ENCODE measurements at regions of chr10 and their contacts with region 1.

Region 1: GRCh38 chr10:8053446-8054290 is 820 bp upstream of the GATA3 start:
- DNase-seq: peak; percentile 93 to 95
- ATAC-seq: peak; percentile 69 to 84 (median 74)
- H3K4me3 ChIP-seq: peak overlapping the region; percentile 63
- H3K4me3 Mint-ChIP-seq: peak overlapping the region; percentile 95
- H3K27ac ChIP-seq: peak overlapping the region; percentile 73
- H3K27ac Mint-ChIP-seq: peak overlapping the region; percentile 86 to 98
- H3K4me1 ChIP-seq: peaks cover 68% of the 10 kb centered on the region
- H3K4me1 Mint-ChIP-seq: peaks cover 52 to 69% of the 10 kb centered on the region in 2 donors
- H3K27me3 ChIP-seq: peaks cover 36% of the 10 kb centered on the region
- H3K27me3 Mint-ChIP-seq: peaks cover 21 to 33% of the 10 kb centered on the region in 2 donors
- CTCF ChIP-seq: peak; percentile 16

Region 2: DNA sequence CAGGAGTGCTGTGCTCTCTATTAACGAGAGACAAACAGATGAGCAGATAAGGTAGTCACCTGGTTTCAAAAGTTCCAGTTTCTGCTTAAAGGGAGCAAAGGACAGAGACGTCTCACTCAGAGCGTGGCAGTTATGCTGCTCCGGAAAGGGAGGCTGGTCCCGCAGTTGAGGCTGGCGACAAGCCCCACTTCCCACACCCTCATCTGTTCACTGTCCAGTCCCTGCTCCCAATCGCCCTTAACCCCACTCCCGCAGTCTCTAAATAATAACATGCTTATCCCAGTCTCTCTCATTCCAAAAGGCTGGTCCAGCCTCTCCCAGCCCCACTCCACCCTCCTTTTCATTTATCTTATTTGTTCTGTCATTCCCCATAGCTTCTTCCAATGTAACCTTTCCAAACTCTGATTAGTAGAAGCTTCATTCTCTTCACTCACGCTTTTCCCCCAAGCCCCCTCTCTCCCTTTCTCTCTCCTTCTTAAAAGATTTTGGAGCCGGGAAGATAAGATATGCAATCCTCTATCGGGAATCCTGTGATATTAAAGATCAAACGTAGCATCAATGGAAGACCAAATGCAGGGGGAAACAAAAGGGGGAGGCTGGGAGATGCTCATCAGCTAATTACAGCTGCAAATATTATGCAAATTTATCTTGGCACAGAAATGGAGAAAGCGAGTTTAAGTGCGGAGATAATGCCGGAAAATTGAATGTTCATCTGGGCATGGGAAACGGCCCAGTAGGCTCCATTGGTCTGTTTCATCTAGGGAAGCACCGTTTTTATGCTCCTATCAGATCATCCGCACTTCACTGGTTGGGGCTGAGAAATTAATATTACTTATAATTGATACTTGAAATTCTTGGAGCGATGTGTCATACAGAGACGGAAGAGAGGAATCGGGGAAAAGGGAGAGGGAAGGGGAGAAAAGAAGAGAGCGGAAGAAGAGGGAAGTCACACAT is 15.4 kb before region 1 on chr10:
- intact Hi-C with region 1: loop called (anchors 2 kb)
- DNase-seq: peak in 1 of 2 donors; percentile 60
- ATAC-seq: peak in 1 of 3 donors; percentile 36
- H3K4me3 ChIP-seq: no peak overlapping the region
- H3K4me3 Mint-ChIP-seq: peak overlapping the region; percentile 35
- H3K27ac ChIP-seq: no peak overlapping the region
- H3K27ac Mint-ChIP-seq: peak overlapping the region in 1 of 2 donors; percentile 71
- H3K4me1 ChIP-seq: peaks cover 42% of the 10 kb centered on the region
- H3K4me1 Mint-ChIP-seq: peaks cover 35 to 51% of the 10 kb centered on the region in 2 donors
- H3K27me3 ChIP-seq: peaks cover 91% of the 10 kb centered on the region
- H3K27me3 Mint-ChIP-seq: peaks cover 72 to 75% of the 10 kb centered on the region in 2 donors
- CTCF ChIP-seq: no peak

Region 3: DNA sequence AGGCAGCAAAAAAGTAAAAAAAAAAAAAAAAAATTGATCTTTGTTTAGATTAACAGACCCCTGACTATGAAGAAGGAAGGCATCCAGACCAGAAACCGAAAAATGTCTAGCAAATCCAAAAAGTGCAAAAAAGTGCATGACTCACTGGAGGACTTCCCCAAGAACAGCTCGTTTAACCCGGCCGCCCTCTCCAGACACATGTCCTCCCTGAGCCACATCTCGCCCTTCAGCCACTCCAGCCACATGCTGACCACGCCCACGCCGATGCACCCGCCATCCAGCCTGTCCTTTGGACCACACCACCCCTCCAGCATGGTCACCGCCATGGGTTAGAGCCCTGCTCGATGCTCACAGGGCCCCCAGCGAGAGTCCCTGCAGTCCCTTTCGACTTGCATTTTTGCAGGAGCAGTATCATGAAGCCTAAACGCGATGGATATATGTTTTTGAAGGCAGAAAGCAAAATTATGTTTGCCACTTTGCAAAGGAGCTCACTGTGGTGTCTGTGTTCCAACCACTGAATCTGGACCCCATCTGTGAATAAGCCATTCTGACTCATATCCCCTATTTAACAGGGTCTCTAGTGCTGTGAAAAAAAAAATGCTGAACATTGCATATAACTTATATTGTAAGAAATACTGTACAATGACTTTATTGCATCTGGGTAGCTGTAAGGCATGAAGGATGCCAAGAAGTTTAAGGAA is 20.2 kb after region 1 on chr10:
- intact Hi-C with region 1: no loop called
- DNase-seq: peak in 1 of 2 donors; percentile 25
- ATAC-seq: peak; percentile 54 to 71 (median 57)
- H3K4me3 ChIP-seq: no peak overlapping the region
- H3K4me3 Mint-ChIP-seq: peak overlapping the region; percentile 13
- H3K27ac ChIP-seq: no peak overlapping the region
- H3K27ac Mint-ChIP-seq: peak overlapping the region; percentile 81
- H3K4me1 ChIP-seq: peaks cover 16% of the 10 kb centered on the region
- H3K4me1 Mint-ChIP-seq: peaks cover 42 to 50% of the 10 kb centered on the region in 2 donors
- H3K27me3 ChIP-seq: no peaks in the 10 kb centered on the region
- H3K27me3 Mint-ChIP-seq: no peaks in the 10 kb centered on the region
- CTCF ChIP-seq: no peak

Region 4: GRCh38 chr10:8183241-8183704 is 129.6 kb after region 1 on chr10:
- intact Hi-C with region 1: loop called (anchors 1 kb)
- DNase-seq: peak in 1 of 2 donors; percentile 86
- ATAC-seq: peak; percentile 92 to 96 (median 95)
- H3K4me3 ChIP-seq: no peak overlapping the region
- H3K4me3 Mint-ChIP-seq: peak overlapping the region; percentile 18
- H3K27ac ChIP-seq: peak overlapping the region; percentile 36
- H3K27ac Mint-ChIP-seq: peak overlapping the region; percentile 83 to 89
- H3K4me1 ChIP-seq: peaks cover 8% of the 10 kb centered on the region
- H3K4me1 Mint-ChIP-seq: peaks cover 21 to 29% of the 10 kb centered on the region in 2 donors
- H3K27me3 ChIP-seq: no peaks in the 10 kb centered on the region
- H3K27me3 Mint-ChIP-seq: peaks cover 4 to 23% of the 10 kb centered on the region in 2 donors
- CTCF ChIP-seq: no peak

Region 5: GRCh38 chr10:8331883-8332729 is 278.4 kb after region 1 on chr10:
- intact Hi-C with region 1: loop called (anchors 1 kb)
- DNase-seq: peak; percentile 84 to 97
- ATAC-seq: peak; percentile 89 to 96 (median 96)
- H3K4me3 ChIP-seq: peak overlapping the region; percentile 52
- H3K4me3 Mint-ChIP-seq: peak overlapping the region; percentile 61
- H3K27ac ChIP-seq: peak overlapping the region; percentile 91
- H3K27ac Mint-ChIP-seq: peak overlapping the region; percentile 73 to 89
- H3K4me1 ChIP-seq: peaks cover 25% of the 10 kb centered on the region
- H3K4me1 Mint-ChIP-seq: peaks cover 30 to 38% of the 10 kb centered on the region in 2 donors
- H3K27me3 ChIP-seq: no peaks in the 10 kb centered on the region
- H3K27me3 Mint-ChIP-seq: peaks cover 0 to 2% of the 10 kb centered on the region in 2 donors
- CTCF ChIP-seq: no peak

Region 6: DNA sequence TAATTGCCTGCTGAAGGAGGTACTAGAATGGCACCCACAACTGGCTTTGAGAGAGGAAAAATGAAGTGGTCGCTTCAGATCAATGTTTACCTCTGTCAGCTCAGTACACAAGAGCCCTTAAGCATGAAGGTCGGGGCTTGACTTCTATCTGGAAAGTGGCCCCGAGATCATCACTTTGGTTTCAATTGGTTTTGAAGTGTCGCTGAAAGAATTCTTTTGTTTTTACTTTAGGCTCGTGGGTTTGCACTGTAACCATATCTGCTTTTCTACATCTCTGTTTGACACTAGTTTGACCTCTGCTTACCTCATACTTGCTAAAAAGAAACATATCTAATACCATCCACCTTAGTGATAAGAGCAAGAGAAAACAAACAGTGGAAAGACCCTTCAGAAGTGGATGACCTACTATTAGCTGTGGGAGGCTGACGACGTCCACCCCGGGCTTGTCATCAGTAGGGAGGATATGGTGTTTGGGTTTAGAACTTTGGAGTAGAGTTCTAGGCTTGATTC is 362.6 kb after region 1 on chr10:
- intact Hi-C with region 1: loop called (anchors 2 kb)
- DNase-seq: peak; percentile 35 to 83
- ATAC-seq: peak; percentile 83 to 92 (median 91)
- H3K4me3 ChIP-seq: no peak overlapping the region
- H3K4me3 Mint-ChIP-seq: peak overlapping the region; percentile 79
- H3K27ac ChIP-seq: peak overlapping the region; percentile 93
- H3K27ac Mint-ChIP-seq: peak overlapping the region; percentile 97
- H3K4me1 ChIP-seq: peaks cover 19% of the 10 kb centered on the region
- H3K4me1 Mint-ChIP-seq: peaks cover 36 to 37% of the 10 kb centered on the region in 2 donors
- H3K27me3 ChIP-seq: no peaks in the 10 kb centered on the region
- H3K27me3 Mint-ChIP-seq: peaks cover 0 to 3% of the 10 kb centered on the region in 2 donors
- CTCF ChIP-seq: no peak

Region 7: GRCh38 chr10:8473205-8473604 is 419.5 kb after region 1 on chr10:
- intact Hi-C with region 1: loop called (anchors 5 kb)
- DNase-seq: peak in 1 of 2 donors; percentile 75
- ATAC-seq: peak in 2 of 3 donors; percentile 59 to 73
- H3K4me3 ChIP-seq: no peak overlapping the region
- H3K4me3 Mint-ChIP-seq: no peak overlapping the region
- H3K27ac ChIP-seq: no peak overlapping the region
- H3K27ac Mint-ChIP-seq: no peak overlapping the region
- H3K4me1 ChIP-seq: no peaks in the 10 kb centered on the region
- H3K4me1 Mint-ChIP-seq: no peaks in the 10 kb centered on the region
- H3K27me3 ChIP-seq: peaks cover 5% of the 10 kb centered on the region
- H3K27me3 Mint-ChIP-seq: peaks cover 28 to 40% of the 10 kb centered on the region in 2 donors
- CTCF ChIP-seq: no peak

Region 8: GRCh38 chr10:9209105-9209798 is 1155.6 kb after region 1 on chr10:
- intact Hi-C with region 1: loop called (anchors 5 kb)
- DNase-seq: peak; percentile 56 to 83
- ATAC-seq: peak in 2 of 3 donors; percentile 65 to 67
- H3K4me3 ChIP-seq: no peak overlapping the region
- H3K4me3 Mint-ChIP-seq: no peak overlapping the region
- H3K27ac ChIP-seq: no peak overlapping the region
- H3K27ac Mint-ChIP-seq: no peak overlapping the region
- H3K4me1 ChIP-seq: no peaks in the 10 kb centered on the region
- H3K4me1 Mint-ChIP-seq: no peaks in the 10 kb centered on the region
- H3K27me3 ChIP-seq: peaks cover 3% of the 10 kb centered on the region
- H3K27me3 Mint-ChIP-seq: peaks cover 4 to 14% of the 10 kb centered on the region in 2 donors
- CTCF ChIP-seq: peak; percentile 89

Measured in natural killer cell (primary cell).